ENCODE measurements at regions of chr2 and their contacts with region 1.

Region 1: DNA sequence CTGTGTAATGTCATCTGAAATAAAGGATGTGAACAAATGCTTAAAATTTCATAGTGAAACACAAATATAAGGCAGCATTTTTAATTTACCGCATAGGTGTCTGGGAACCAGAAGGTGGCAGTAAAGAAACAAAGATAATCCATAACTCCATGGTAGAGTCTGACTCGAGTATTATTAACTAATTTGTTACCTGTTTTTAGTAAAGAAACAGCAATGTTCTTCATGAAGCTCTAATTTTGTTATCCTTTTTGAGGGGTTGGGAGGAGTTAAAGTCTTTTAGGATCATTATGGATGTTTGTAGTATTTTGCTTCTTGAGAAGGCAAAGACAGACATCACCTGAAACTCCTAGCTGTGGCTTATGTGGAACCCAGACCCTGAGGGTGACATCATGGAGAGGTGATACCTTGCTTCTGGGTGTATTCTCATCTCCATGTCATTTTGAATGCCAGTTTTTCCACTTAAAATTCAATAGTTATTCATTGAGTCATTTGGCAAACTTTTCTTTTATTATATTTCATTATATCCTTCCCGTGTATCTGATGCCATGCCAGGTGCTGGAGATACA is 286.2 kb upstream of the EPAS1 start:
- DNase-seq: no peak
- H3K4me3 Mint-ChIP-seq: no peak overlapping the region
- H3K27ac Mint-ChIP-seq: no peak overlapping the region
- H3K4me1 Mint-ChIP-seq: peaks cover 11% of the 10 kb centered on the region
- H3K27me3 Mint-ChIP-seq: no peaks in the 10 kb centered on the region

Region 2: DNA sequence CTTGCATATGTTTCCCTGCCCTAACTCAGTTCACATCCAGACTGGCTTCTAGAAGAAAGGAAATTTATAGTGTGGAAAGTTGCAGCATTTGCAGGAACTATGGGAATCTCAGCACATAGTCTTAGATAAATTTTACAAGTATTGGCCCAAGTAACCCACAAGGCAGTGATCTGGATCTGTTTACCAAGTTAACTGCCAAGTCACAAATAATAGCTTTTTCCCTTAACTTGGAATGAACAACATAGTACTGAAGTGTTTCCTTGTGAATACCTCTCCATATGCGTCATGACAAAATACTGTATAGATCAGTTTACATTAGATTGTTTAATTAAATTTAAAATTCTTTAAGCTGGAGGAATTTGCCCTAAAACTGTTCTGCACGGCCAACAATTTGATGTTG is 30.4 kb after region 1 on chr2:
- CTCF ChIA-PET with region 1: no interaction called
- POLR2A ChIA-PET with region 1: no interaction called
- intact Hi-C with region 1: loop called (anchors 5 kb)
- DNase-seq: no peak
- H3K4me3 Mint-ChIP-seq: no peak overlapping the region
- H3K27ac Mint-ChIP-seq: peak overlapping the region; percentile 66
- H3K4me1 Mint-ChIP-seq: peaks cover 27% of the 10 kb centered on the region
- H3K27me3 Mint-ChIP-seq: no peaks in the 10 kb centered on the region

Region 3: DNA sequence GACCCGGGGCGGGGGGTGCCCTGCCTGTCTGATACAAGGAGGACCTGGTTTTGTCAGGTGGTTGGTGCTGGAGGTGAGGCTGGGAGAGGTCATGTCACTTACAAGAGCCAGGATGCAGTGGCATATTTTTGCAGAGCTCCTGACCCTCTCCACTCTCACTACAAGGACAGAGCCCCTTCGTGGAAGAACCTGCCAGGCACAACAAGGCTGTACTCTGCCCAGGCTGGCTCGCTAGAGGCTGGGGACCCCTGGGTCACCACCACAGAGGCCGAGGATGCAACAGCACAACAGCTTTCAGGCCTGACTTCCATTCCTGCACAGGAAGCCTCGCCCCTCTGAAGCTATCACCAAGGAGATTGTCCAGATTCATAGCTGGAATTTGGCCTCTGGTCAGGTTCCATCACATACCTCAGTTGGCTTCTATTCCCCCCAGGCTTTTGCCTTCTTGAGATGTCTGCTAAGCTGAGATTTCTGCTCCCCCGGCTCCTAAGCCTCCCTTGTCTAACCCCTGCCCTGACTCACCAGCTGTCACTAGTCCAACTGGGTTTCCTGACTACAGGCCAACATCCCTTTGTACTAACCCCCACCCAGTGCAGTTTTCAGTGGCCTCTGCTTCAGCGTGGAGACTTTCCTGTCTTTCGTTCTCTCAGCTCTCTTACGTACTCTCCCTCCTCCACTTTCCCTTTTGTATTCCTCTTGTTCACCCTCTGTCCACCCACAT is 153.7 kb after region 1 on chr2:
- CTCF ChIA-PET with region 1: no interaction called
- POLR2A ChIA-PET with region 1: no interaction called
- intact Hi-C with region 1: no loop called
- DNase-seq: no peak
- H3K4me3 Mint-ChIP-seq: no peak overlapping the region
- H3K27ac Mint-ChIP-seq: no peak overlapping the region
- H3K4me1 Mint-ChIP-seq: no peaks in the 10 kb centered on the region
- H3K27me3 Mint-ChIP-seq: no peaks in the 10 kb centered on the region

Region 4: DNA sequence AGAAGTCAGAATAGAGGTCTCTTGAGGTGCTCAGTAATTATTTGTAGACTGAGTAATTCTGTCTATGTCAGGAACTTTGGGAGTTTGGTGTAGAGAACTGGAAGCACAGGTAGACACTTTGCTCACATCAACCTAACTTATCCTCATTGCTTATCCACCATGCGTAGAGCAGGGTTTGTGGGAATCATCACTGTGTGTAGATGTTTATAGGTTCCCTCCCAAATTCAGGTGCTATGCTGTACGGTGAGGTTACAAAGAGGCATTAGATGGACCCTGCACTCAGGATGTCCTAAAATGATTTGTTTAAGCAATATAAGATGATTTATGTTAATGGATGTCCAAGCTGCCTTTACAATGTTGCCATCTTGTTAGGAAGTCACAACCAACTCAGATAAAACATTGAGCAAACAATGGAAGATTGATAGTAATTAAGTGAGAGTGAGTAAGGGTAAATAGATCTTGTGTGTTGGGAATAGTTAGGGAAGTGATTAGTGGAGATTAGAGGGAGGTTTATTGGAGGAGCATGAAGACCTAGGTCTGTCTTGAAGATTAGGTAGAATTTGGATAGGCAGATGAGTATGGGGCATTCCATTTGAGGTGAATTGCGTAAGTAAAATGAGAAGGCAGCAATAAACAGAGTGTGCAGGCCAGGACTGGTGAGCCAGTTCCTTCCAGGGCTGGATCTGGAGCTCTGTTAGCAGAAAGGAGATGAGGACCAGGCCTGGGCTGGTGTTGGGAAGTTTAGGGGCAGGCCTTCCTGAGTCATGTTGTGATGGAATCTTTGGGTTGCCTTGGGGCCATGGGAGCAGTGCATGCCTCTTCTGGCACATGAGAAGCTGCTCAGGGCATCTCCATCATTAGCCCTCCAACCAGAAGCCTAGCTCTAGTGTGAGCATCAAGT is 298.3 kb after region 1 on chr2:
- CTCF ChIA-PET with region 1: no interaction called
- POLR2A ChIA-PET with region 1: no interaction called
- intact Hi-C with region 1: no loop called
- DNase-seq: no peak
- H3K4me3 Mint-ChIP-seq: no peak overlapping the region
- H3K27ac Mint-ChIP-seq: no peak overlapping the region
- H3K4me1 Mint-ChIP-seq: peaks cover 15% of the 10 kb centered on the region
- H3K27me3 Mint-ChIP-seq: peaks cover 28% of the 10 kb centered on the region

Measured in activated CD4-positive, alpha-beta memory T cell treated with anti-CD3 and anti-CD28 coated beads for 36 hours (primary cell).